ENCODE measurements at regions of chr9 and their contacts with region 1.

Region 1: GRCh38 chr9:128610897-128611296 is 45.8 kb downstream of the DYNC2I2 start:
- DNase-seq: no peak
- H3K4me3 ChIP-seq: no peak overlapping the region
- H3K27ac ChIP-seq: no peak overlapping the region
- H3K4me1 ChIP-seq: peaks cover 0 to 7% (median 0%) of the 10 kb centered on the region in 4 donors
- H3K27me3 ChIP-seq: no peaks in the 10 kb centered on the region
- CTCF ChIP-seq: no peak
- EP300 ChIP-seq: no peak
- POLR2A ChIP-seq: no peak

Region 2: DNA sequence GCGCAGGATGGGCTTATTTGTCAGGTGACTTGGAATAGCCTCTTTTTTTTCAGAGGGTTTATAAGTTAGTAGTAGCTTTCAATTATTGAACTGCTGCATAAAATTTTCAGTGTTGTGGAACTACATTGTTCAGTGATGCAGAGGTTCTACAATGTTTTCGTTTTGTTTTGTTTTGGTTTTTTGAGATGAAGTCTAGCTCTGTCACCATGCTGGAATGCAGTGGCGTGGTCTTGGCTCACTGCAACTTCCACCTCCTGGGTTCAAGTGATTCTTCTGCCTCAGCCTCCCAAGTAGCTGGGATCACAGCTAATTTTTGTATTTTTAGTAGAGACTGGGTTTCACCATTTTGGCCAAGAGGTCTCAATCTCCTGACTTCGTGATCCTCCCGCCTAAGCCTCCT is 358.6 kb after region 1 on chr9:
- intact Hi-C with region 1: loop called (anchors 10 kb)
- DNase-seq: peak in 1 of 2 donors; percentile 7
- H3K4me3 ChIP-seq: no peak overlapping the region
- H3K27ac ChIP-seq: no peak overlapping the region
- H3K4me1 ChIP-seq: no peaks in the 10 kb centered on the region
- H3K27me3 ChIP-seq: no peaks in the 10 kb centered on the region
- CTCF ChIP-seq: no peak
- EP300 ChIP-seq: no peak
- POLR2A ChIP-seq: no peak

Measured in stomach (tissue), 19 donors.